ENCODE measurements at regions of chr16 and their contacts with region 1.

Region 1: DNA sequence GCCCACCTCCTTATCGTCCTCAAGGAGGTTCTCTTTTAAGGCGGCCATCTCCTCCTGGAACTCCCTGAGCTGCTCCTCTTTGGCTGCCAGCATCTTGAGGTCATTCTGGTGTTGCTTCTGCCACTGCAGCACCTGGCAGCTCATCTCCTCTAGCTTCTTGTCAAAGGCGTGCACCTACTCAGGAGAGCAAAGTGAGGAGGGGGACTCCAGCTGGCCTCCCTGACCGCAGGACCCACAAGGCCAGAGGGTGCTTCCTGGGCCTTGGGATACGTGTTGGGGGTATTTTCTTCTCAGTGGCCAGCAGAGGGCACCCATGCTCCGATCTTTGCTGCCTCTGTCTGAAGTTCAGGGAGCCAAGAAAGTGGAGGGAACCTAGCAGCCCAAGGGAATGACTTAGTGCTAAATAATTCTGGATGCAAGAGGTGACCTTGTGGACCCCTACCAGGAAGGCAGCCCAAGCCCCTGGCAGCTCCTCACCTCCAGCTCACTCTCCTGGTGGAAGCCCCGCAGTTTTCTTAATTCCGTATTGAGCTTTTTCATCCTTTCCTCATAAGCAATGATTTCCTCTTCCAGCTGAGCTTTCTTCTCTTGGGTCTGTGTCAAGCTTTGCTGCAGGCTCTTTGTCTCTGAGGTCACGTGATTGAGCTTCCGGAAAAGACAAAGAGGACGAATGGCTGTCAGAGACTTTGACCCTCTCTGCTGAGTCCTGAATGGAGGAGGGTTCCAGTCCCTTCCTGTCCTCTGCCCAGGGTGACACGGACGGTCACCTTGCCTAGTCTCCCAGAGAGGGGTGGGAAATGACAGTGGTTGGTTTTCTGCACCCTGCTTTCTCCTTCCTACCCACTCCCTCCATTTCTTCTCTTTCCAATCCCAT is 31.4 kb downstream of the DHX38 start:
- DNase-seq: peak; percentile 71
- H3K4me3 Mint-ChIP-seq: no peak overlapping the region
- H3K27ac Mint-ChIP-seq: no peak overlapping the region
- H3K4me1 Mint-ChIP-seq: no peaks in the 10 kb centered on the region
- H3K27me3 Mint-ChIP-seq: no peaks in the 10 kb centered on the region
- CTCF ChIP-seq: peak; percentile 73

Region 2: DNA sequence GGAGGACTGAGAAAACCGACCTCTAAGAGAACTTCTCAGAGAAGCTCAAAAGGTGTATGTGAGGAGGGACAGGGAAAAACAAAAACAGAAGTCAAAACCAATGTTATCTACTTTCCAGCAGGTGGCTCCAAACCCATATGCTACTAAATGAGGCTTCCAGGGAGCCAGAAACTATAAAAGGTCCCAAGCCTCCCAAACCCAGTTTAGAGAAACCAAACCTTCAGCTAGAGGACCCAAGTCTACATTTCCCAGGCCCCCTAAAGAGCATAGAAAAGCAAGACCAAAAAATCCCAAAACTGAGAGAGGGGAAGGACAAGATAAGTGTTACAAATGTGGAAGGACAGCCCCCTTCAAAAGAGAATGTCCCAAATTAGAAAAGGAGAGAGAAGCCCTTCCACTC is 58.3 kb before region 1 on chr16:
- CTCF ChIA-PET with region 1: no interaction called
- POLR2A ChIA-PET with region 1: no interaction called
- intact Hi-C with region 1: no loop called
- DNase-seq: peak; percentile 54
- H3K4me3 Mint-ChIP-seq: no peak overlapping the region
- H3K27ac Mint-ChIP-seq: peak overlapping the region; percentile 43
- H3K4me1 Mint-ChIP-seq: no peaks in the 10 kb centered on the region
- H3K27me3 Mint-ChIP-seq: no peaks in the 10 kb centered on the region
- CTCF ChIP-seq: peak; percentile 43

Region 3: GRCh38 chr16:72111657-72112451 is 13.1 kb before region 1 on chr16:
- CTCF ChIA-PET with region 1: interaction called, 22 read pairs
- POLR2A ChIA-PET with region 1: no interaction called
- intact Hi-C with region 1: no loop called
- DNase-seq: no peak
- H3K4me3 Mint-ChIP-seq: no peak overlapping the region
- H3K27ac Mint-ChIP-seq: no peak overlapping the region
- H3K4me1 Mint-ChIP-seq: no peaks in the 10 kb centered on the region
- H3K27me3 Mint-ChIP-seq: no peaks in the 10 kb centered on the region
- CTCF ChIP-seq: no peak

Region 4: DNA sequence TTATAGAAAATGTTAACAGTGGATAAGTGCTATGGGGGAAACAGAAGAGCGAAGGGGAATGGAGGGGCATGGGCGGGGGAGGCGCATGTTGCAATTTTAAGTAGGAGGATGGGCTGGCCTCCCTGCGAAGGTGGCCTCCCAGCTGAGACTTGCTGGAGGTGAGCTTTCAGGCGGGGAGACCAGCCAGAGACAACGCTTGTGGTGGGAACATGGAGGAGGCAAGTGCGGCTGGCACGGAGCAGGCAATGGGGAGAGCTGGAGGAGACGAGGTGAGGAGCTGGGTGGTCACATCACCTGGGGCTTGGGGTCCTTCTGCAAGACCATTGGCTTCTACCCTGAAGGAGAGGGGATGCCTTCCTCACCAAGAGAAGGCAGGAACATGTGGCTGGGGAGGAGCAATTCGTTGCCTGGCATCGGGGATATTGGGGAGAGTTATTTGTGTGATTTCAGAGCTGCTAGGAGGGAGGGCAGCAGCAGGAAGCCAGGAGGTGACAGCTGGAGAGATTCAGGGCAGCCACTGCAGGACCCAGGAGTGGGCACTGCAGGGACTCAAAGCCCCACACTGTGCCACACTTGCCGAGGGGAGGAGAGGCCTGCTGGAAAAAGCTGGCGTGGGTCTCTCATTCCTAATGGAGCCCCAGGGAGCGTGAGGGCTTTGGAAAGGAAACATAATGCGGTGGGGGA is 12.5 kb after region 1 on chr16:
- CTCF ChIA-PET with region 1: interaction called, 18 read pairs
- POLR2A ChIA-PET with region 1: no interaction called
- intact Hi-C with region 1: no loop called
- DNase-seq: no peak
- H3K4me3 Mint-ChIP-seq: no peak overlapping the region
- H3K27ac Mint-ChIP-seq: no peak overlapping the region
- H3K4me1 Mint-ChIP-seq: no peaks in the 10 kb centered on the region
- H3K27me3 Mint-ChIP-seq: no peaks in the 10 kb centered on the region
- CTCF ChIP-seq: no peak

Region 5: DNA sequence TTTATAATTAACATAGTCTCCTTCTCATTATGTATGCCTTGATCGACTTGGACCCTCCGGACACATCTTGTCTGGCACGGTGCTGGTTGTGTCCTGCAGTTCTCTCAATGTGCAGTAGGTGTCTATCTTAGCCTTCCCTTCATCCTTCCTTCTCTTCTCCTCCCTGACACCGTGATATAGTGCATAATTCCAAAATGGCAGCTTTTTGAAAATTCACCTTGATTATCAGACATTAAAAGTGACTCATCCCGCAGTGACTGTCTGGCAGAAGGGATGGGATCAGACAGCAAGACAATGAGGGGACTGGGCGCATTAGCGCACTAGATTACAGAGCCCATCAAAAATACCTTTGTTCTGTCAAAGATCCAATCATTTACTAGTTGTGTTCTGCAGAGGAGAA is 116.9 kb after region 1 on chr16:
- CTCF ChIA-PET with region 1: interaction called, 8 read pairs
- POLR2A ChIA-PET with region 1: no interaction called
- intact Hi-C with region 1: loop called (anchors 1 kb)
- DNase-seq: peak; percentile 68
- H3K4me3 Mint-ChIP-seq: no peak overlapping the region
- H3K27ac Mint-ChIP-seq: no peak overlapping the region
- H3K4me1 Mint-ChIP-seq: peaks cover 3% of the 10 kb centered on the region
- H3K27me3 Mint-ChIP-seq: no peaks in the 10 kb centered on the region
- CTCF ChIP-seq: peak; percentile 76

Region 6: GRCh38 chr16:72467157-72467759 is 342.3 kb after region 1 on chr16:
- CTCF ChIA-PET with region 1: interaction called, 98 read pairs
- POLR2A ChIA-PET with region 1: no interaction called
- intact Hi-C with region 1: loop called (anchors 1 kb)
- DNase-seq: peak; percentile 61
- H3K4me3 Mint-ChIP-seq: no peak overlapping the region
- H3K27ac Mint-ChIP-seq: no peak overlapping the region
- H3K4me1 Mint-ChIP-seq: no peaks in the 10 kb centered on the region
- H3K27me3 Mint-ChIP-seq: no peaks in the 10 kb centered on the region
- CTCF ChIP-seq: peak; percentile 73

Region 7: GRCh38 chr16:72769876-72770275 is 644.9 kb after region 1 on chr16:
- CTCF ChIA-PET with region 1: no interaction called
- POLR2A ChIA-PET with region 1: no interaction called
- intact Hi-C with region 1: loop called (anchors 10 kb)
- DNase-seq: no peak
- H3K4me3 Mint-ChIP-seq: no peak overlapping the region
- H3K27ac Mint-ChIP-seq: no peak overlapping the region
- H3K4me1 Mint-ChIP-seq: peaks cover 6% of the 10 kb centered on the region
- H3K27me3 Mint-ChIP-seq: no peaks in the 10 kb centered on the region
- CTCF ChIP-seq: no peak

Region 8: GRCh38 chr16:73196670-73197069 is 1071.7 kb after region 1 on chr16:
- CTCF ChIA-PET with region 1: no interaction called
- POLR2A ChIA-PET with region 1: no interaction called
- intact Hi-C with region 1: loop called (anchors 10 kb)
- DNase-seq: peak; percentile 85
- H3K4me3 Mint-ChIP-seq: no peak overlapping the region
- H3K27ac Mint-ChIP-seq: no peak overlapping the region
- H3K4me1 Mint-ChIP-seq: no peaks in the 10 kb centered on the region
- H3K27me3 Mint-ChIP-seq: peaks cover 3% of the 10 kb centered on the region
- CTCF ChIP-seq: peak; percentile 79

Measured in MCF 10A (cell line).